ENCODE measurements at regions of chr4 and their contacts with region 1.

Region 1: DNA sequence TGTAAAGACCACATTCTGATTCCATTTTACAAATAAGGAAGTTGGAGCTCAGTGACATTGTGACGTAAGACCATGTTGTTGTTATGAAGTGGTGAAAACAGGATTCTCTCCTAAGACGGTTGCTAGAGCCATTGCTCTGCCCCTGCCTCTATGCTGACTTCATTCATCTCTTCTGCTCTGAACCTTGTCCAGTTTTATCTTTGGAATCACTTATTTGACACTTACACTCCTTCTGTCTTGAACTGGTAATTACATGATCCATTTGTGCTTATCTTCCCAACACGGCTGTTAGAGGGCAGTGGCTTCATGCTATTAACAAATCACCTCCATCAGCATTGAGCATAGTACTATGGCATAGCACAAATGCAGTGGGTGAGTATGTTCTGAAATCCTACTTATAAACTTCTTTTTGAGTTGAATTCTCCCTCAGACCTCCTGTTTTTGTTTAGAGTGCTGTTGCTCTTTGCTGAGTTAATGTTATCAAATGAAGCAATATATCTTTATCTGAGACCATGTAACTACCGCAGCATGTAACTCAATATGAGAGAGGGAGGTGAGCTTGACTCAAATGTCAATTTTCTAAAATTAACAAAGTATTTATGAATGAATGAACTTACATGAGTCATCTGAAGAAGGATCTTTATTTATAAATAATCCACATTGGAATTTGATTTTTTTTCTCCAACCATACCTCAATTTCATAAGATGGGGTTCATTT is 177.8 kb downstream of the RASL11B start:
- DNase-seq: no peak
- ATAC-seq: no peak
- H3K4me3 ChIP-seq: no peak overlapping the region
- H3K27ac ChIP-seq: no peak overlapping the region
- H3K4me1 ChIP-seq: no peaks in the 10 kb centered on the region
- H3K27me3 ChIP-seq: no peaks in the 10 kb centered on the region
- CTCF ChIP-seq: no peak

Region 2: DNA sequence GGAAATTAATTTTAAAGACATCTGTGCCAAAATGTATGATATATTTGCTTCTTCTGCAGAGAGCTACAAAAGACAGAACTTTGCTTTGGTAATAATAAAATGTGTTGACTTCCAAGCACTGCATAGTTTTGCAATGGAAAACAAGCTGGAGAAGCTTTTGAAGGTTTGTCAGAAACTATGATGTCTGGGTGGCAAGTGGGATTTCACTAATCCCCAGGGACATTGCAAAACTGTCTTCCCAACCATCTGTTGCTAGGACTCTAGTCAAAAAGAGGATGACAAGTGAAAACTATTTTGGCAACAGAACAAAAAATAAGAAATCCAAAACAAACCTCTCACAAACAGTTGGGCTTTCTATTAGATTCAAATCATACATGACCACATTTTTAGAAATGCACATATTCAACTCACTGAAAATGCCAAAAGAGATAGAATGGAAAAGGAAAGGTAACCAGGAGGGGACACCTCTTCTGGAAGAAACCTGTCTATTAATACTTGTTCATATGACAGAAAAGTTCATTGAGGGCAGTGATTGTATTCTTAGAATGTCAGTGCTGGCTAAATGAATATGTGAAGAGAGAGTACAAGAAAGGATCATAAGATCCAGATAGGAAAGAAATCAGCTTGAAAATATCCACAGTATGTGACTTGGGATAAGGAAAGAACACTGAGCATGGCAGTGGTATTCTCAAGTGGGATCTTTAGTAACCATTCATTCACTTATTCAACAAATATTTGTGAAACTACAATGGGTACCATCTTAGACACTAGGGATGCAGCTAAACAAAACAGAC is 50.2 kb after region 1 on chr4:
- intact Hi-C with region 1: loop called in 1 of 10 experiments (anchors 10 kb)
- DNase-seq: no peak
- ATAC-seq: peak in 6 of 8 donors; percentile 29 to 51 (median 44)
- H3K4me3 ChIP-seq: no peak overlapping the region
- H3K27ac ChIP-seq: peak overlapping the region in 1 of 10 donors; percentile 11
- H3K4me1 ChIP-seq: peaks cover 0 to 30% (median 8%) of the 10 kb centered on the region in 9 donors
- H3K27me3 ChIP-seq: no peaks in the 10 kb centered on the region
- CTCF ChIP-seq: no peak

Region 3: DNA sequence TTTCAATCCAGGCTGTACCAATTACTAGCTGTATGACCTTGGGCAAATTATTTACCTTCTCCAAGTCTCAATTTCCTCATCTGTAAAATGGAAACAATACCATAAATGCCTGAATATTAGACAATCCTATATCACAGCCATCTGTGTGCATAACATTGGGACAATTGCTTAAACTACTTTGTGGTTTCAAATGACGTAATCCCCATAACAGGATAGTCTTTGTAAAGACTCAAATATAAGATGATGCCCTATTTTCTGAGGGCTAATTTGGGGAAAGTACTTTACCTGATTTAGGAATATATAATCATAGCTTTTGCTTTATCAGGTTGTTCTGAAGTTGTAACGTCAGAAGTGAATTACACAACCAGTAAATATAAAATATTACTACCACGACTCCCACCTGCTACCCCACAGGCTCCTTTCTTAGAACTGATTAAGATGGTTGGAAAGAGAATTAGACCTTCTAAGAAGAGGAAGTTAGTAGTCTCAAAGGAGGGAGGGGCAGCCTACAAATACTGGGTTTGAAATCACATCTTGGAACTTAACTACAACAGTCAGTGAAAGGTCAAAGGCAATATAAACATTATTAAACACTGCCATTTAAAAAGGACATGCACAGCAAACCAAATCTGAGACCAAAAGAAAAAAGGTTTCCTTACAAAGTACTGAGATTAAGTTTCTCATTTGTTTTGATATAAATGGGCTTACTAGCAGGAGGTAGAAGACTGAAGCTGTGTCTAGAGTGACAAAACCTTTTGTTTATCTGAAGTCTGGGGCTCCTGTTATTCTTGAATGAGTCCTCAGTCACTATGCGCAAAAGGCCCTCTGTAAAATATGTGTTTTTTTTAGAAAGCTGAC is 111.0 kb after region 1 on chr4:
- intact Hi-C with region 1: loop called in 1 of 10 experiments (anchors 10 kb)
- DNase-seq: no peak
- ATAC-seq: no peak
- H3K4me3 ChIP-seq: no peak overlapping the region
- H3K27ac ChIP-seq: no peak overlapping the region
- H3K4me1 ChIP-seq: peaks cover 0 to 11% (median 0%) of the 10 kb centered on the region in 9 donors
- H3K27me3 ChIP-seq: no peaks in the 10 kb centered on the region
- CTCF ChIP-seq: no peak

Region 4: GRCh38 chr4:53656421-53657046 is 616.6 kb after region 1 on chr4:
- intact Hi-C with region 1: no loop called
- DNase-seq: no peak
- ATAC-seq: peak in 7 of 8 donors; percentile 49 to 84 (median 62)
- H3K4me3 ChIP-seq: no peak overlapping the region
- H3K27ac ChIP-seq: peak overlapping the region in 9 of 10 donors; percentile 39 to 71 (median 57)
- H3K4me1 ChIP-seq: peaks cover 0 to 41% (median 16%) of the 10 kb centered on the region in 9 donors
- H3K27me3 ChIP-seq: no peaks in the 10 kb centered on the region
- CTCF ChIP-seq: peak in 7 of 9 donors; percentile 29 to 55 (median 41)